GM12878 (cell line): ENCODE measurements at regions of chr2 and their contacts with region 1.

Region 1: DNA sequence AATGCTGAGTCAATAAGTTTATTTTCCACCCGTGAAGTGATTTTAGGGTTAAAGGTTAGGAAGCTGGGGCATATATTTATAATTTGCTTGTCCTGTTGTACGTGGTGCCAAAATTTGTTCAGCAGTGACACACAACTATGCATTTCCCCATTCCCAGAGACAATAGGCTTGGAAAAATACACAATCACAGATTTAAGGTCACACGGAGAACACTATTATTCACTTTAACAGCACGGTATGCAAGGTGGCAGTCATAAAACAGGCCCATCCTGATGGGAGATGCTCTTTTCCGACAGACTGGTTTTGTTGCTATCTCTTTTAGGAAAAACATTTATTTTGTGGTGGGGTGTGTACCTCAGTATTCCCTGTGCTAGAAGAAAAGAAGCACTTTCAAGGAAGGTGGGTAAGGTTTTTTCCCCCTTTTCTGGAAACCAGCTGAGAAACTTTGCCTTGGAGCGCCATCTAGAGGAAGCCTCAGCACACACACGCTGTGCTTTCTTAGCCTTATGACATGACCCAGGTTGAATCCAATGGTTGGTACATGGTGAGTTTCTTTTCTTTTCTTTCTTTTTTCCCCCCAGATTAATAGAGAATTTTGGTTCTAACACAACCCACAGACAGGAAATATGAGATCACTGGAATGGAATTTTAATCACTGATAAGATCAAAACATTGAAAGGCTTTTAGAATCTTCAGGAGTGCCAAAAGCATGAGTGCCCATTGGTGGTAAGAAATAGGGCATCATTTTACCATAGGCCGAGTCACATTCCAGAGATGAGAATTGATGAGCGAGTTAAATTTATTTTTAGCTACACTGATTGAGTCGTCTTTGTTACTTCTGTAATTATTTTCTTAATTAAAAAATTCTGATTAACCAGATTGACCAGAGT is 332.1 kb downstream of the AGPS start:
- DNase-seq: no peak
- ATAC-seq: peak; percentile 92
- H3K4me3 ChIP-seq: no peak overlapping the region
- H3K27ac ChIP-seq: no peak overlapping the region
- H3K4me1 ChIP-seq: no peaks in the 10 kb centered on the region
- H3K27me3 ChIP-seq: no peaks in the 10 kb centered on the region; a peak in 1 of 4 replicates
- CTCF ChIP-seq: peak; percentile 85 to 93 (median 90)
- EP300 ChIP-seq: no peak
- POLR2A ChIP-seq: no peak
- RAD21 ChIP-seq: peak; percentile 94

Region 2: GRCh38 chr2:177338177-177338721 is 386.4 kb before region 1 on chr2:
- CTCF ChIA-PET with region 1: interaction called, 104 read pairs
- POLR2A ChIA-PET with region 1: interaction called, 3 read pairs
- RAD21 ChIA-PET with region 1: interaction called, 20 read pairs
- SMC1A ChIA-PET with region 1: interaction called, 46 read pairs
- in situ Hi-C with region 1: loop called (anchors 5 kb)
- intact Hi-C with region 1: loop called (anchors 1 kb)
- DNase-seq: no peak
- ATAC-seq: no peak
- H3K4me3 ChIP-seq: no peak overlapping the region
- H3K27ac ChIP-seq: no peak overlapping the region
- H3K4me1 ChIP-seq: no peaks in the 10 kb centered on the region
- H3K27me3 ChIP-seq: no peaks in the 10 kb centered on the region
- CTCF ChIP-seq: no peak
- EP300 ChIP-seq: no peak
- POLR2A ChIP-seq: no peak
- RAD21 ChIP-seq: no peak

Region 3: GRCh38 chr2:177419274-177419673 is 305.4 kb before region 1 on chr2:
- CTCF ChIA-PET with region 1: interaction called, 14 read pairs
- POLR2A ChIA-PET with region 1: no interaction called
- RAD21 ChIA-PET with region 1: interaction called, 3 read pairs
- SMC1A ChIA-PET with region 1: no interaction called
- in situ Hi-C with region 1: no loop called
- intact Hi-C with region 1: loop called (anchors 5 kb)
- DNase-seq: no peak
- ATAC-seq: no peak
- H3K4me3 ChIP-seq: no peak overlapping the region
- H3K27ac ChIP-seq: no peak overlapping the region
- H3K4me1 ChIP-seq: no peaks in the 10 kb centered on the region
- H3K27me3 ChIP-seq: no peaks in the 10 kb centered on the region
- CTCF ChIP-seq: no peak
- EP300 ChIP-seq: no peak
- POLR2A ChIP-seq: no peak
- RAD21 ChIP-seq: no peak

Region 4: DNA sequence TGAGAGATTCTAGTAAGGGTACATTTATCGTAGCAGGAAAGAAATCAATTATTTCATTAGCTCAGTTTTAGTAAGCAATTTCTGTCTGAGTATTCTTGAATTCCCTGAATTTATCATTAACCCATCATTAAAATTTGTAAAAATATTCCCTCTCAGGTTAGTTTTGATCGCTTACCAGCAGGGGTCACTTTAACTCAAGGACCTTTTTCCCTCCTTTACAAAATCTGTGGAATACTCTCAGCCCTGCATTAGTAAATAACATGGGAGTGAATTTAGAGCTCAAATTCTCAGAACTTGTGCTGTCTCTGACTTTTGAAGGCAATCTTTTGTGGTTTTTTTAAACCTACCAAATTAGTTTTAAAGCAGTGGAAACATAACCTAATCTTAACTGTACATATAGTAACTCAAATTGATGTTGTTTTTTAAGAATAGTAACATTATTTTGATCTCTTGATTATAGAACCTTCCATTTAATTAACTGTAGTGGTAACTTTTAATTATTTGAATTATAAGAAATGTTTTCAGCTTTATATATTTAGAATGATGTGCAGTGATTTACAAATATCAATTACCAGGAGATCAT is 234.8 kb before region 1 on chr2:
- CTCF ChIA-PET with region 1: interaction called, 32 read pairs
- POLR2A ChIA-PET with region 1: no interaction called
- RAD21 ChIA-PET with region 1: no interaction called
- SMC1A ChIA-PET with region 1: interaction called, 5 read pairs
- in situ Hi-C with region 1: no loop called
- intact Hi-C with region 1: loop called (anchors 1 kb)
- DNase-seq: no peak
- ATAC-seq: no peak
- H3K4me3 ChIP-seq: no peak overlapping the region
- H3K27ac ChIP-seq: no peak overlapping the region
- H3K4me1 ChIP-seq: no peaks in the 10 kb centered on the region
- H3K27me3 ChIP-seq: no peaks in the 10 kb centered on the region
- CTCF ChIP-seq: peak; percentile 37 to 49 (median 39); a peak in 5 of 6 replicates
- EP300 ChIP-seq: no peak
- POLR2A ChIP-seq: no peak
- RAD21 ChIP-seq: peak; percentile 65

Region 5: DNA sequence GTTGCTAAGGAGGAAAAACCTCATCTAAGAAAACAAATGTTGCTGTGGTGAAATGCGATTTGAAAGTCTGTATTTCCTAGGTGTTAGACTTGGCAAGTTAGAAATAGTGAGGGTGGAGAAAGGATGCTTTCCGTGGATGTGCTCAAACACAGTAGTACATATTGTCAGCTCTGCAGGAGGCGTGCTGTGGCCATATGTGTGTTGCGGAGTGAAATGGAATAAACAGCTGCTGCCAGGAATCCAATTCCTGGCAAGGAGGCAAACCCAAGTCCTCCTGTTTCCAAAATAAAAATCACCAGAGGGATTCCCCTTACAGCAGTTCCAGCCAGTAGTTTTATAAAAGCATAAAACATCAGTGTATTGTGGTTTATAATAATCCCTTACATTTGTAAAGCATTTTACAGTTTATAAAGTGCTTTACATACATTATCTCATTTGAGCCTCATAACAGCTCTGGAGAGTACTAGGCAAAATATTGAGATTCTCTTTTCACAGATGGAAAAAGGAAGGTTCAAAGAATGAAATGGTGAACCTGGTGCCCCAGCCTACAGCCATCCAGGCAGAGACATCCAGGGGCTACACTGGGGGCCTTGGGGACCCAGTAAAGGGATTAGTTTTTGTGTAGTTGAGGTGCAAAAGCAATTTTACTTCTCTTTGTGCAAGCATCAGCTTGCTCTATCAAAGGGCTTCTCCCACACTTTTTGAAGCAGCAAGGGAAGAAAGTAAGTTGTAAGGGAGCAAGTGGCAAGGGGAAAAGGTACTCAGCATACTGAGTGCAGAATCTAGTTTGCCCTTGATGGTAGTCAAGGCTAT is 126.1 kb before region 1 on chr2:
- CTCF ChIA-PET with region 1: interaction called, 12 read pairs
- POLR2A ChIA-PET with region 1: interaction called, 3 read pairs
- RAD21 ChIA-PET with region 1: no interaction called
- SMC1A ChIA-PET with region 1: no interaction called
- in situ Hi-C with region 1: no loop called
- intact Hi-C with region 1: loop called (anchors 5 kb)
- DNase-seq: no peak
- ATAC-seq: no peak
- H3K4me3 ChIP-seq: no peak overlapping the region
- H3K27ac ChIP-seq: no peak overlapping the region
- H3K4me1 ChIP-seq: no peaks in the 10 kb centered on the region
- H3K27me3 ChIP-seq: no peaks in the 10 kb centered on the region; a peak in 1 of 4 replicates
- CTCF ChIP-seq: no peak
- EP300 ChIP-seq: no peak
- POLR2A ChIP-seq: no peak
- RAD21 ChIP-seq: no peak

Region 6: GRCh38 chr2:177604271-177605065 is 120.2 kb before region 1 on chr2:
- CTCF ChIA-PET with region 1: interaction called, 12 read pairs
- POLR2A ChIA-PET with region 1: interaction called, 3 read pairs
- RAD21 ChIA-PET with region 1: interaction called, 4 read pairs
- SMC1A ChIA-PET with region 1: no interaction called
- in situ Hi-C with region 1: no loop called
- intact Hi-C with region 1: loop called (anchors 5 kb)
- DNase-seq: no peak
- ATAC-seq: peak; percentile 58
- H3K4me3 ChIP-seq: no peak overlapping the region
- H3K27ac ChIP-seq: no peak overlapping the region
- H3K4me1 ChIP-seq: no peaks in the 10 kb centered on the region
- H3K27me3 ChIP-seq: no peaks in the 10 kb centered on the region
- CTCF ChIP-seq: peak; percentile 58 to 63 (median 59); a peak in 5 of 6 replicates
- EP300 ChIP-seq: no peak
- POLR2A ChIP-seq: no peak
- RAD21 ChIP-seq: peak; percentile 63

Region 7: GRCh38 chr2:177689623-177690022 is 35.0 kb before region 1 on chr2:
- CTCF ChIA-PET with region 1: no interaction called
- POLR2A ChIA-PET with region 1: no interaction called
- RAD21 ChIA-PET with region 1: no interaction called
- SMC1A ChIA-PET with region 1: no interaction called
- in situ Hi-C with region 1: no loop called
- intact Hi-C with region 1: no loop called
- DNase-seq: no peak
- ATAC-seq: no peak
- H3K4me3 ChIP-seq: no peak overlapping the region
- H3K27ac ChIP-seq: no peak overlapping the region
- H3K4me1 ChIP-seq: no peaks in the 10 kb centered on the region
- H3K27me3 ChIP-seq: no peaks in the 10 kb centered on the region
- CTCF ChIP-seq: no peak
- EP300 ChIP-seq: no peak
- POLR2A ChIP-seq: no peak
- RAD21 ChIP-seq: no peak

Region 8: GRCh38 chr2:177741866-177742265 is 17.2 kb after region 1 on chr2:
- CTCF ChIA-PET with region 1: interaction called, 11 read pairs
- POLR2A ChIA-PET with region 1: no interaction called
- RAD21 ChIA-PET with region 1: no interaction called
- SMC1A ChIA-PET with region 1: no interaction called
- in situ Hi-C with region 1: no loop called
- intact Hi-C with region 1: no loop called
- DNase-seq: no peak
- ATAC-seq: no peak
- H3K4me3 ChIP-seq: no peak overlapping the region
- H3K27ac ChIP-seq: no peak overlapping the region
- H3K4me1 ChIP-seq: no peaks in the 10 kb centered on the region
- H3K27me3 ChIP-seq: no peaks in the 10 kb centered on the region; a peak in 2 of 4 replicates
- CTCF ChIP-seq: no peak
- EP300 ChIP-seq: no peak
- POLR2A ChIP-seq: no peak
- RAD21 ChIP-seq: no peak

Region 9: DNA sequence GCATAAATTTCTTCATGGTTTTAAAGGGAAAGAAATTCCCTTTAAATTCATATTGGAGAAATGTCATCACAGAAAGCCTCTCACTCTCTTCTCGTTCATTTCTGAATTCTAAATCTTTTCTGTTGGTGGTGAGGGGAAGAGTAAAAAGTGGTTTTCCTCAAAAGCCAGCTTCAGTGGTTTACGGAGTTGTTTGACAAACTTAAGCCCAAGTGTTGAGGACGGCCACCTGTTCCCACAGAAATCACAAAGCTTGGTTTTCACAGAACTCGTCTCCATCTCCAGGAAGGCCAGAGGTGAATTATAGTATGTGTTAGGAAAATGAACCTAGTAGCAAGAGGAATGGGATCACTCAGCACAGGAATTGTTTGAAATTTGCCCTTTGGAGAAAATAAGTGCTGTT is 31.7 kb after region 1 on chr2:
- CTCF ChIA-PET with region 1: no interaction called
- POLR2A ChIA-PET with region 1: no interaction called
- RAD21 ChIA-PET with region 1: no interaction called
- SMC1A ChIA-PET with region 1: no interaction called
- in situ Hi-C with region 1: no loop called
- intact Hi-C with region 1: no loop called
- DNase-seq: no peak
- ATAC-seq: no peak
- H3K4me3 ChIP-seq: no peak overlapping the region
- H3K27ac ChIP-seq: no peak overlapping the region
- H3K4me1 ChIP-seq: no peaks in the 10 kb centered on the region
- H3K27me3 ChIP-seq: no peaks in the 10 kb centered on the region; a peak in 2 of 4 replicates
- CTCF ChIP-seq: no peak
- EP300 ChIP-seq: no peak
- POLR2A ChIP-seq: no peak
- RAD21 ChIP-seq: no peak